AG04449 (cell line): ENCODE measurements at regions of chr11 and their contacts with region 1.

Region 1: DNA sequence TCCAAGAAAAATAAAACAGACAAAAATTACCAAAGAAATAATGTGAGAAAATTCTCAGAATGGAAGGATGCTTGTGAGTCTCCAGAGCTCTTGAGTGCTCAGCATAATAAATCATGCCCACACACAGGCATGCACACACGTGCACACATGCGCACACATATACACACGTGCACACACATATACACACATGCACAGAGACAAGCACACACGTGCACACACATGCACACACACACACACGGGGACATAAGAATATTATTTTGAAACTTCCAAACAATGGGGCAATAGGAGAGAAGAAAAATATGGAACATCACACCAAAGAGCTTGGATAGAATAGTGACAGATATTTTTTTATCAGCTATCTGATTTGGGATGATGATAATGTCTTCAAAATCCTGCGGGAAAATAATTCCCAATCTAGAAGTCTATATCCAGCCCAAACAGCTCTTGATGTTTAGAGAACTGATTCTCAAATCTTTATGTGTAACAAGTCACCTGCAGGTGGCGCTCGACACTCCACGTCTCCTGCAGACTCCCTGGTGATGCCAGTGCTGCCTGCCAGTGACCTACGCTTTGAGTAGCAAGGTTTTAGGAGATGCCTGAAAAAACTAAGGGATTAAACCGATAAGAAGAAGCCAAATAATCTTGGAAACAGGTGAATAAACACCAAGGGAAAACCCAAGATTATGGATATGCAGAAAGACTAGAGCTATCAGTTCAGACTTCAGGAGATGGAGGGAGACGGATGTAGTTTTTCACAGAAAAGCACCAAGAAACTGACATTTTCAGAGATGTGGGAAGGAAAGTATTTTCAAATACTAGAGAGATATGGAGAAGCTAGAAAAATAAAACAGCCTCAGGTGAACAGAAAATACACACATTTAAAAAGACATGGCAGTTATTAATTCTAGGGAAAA is 743.6 kb downstream of the ETS1 start:
- DNase-seq: peak; percentile 16
- H3K4me3 ChIP-seq: no peak overlapping the region
- CTCF ChIP-seq: peak; percentile 75

Region 2: DNA sequence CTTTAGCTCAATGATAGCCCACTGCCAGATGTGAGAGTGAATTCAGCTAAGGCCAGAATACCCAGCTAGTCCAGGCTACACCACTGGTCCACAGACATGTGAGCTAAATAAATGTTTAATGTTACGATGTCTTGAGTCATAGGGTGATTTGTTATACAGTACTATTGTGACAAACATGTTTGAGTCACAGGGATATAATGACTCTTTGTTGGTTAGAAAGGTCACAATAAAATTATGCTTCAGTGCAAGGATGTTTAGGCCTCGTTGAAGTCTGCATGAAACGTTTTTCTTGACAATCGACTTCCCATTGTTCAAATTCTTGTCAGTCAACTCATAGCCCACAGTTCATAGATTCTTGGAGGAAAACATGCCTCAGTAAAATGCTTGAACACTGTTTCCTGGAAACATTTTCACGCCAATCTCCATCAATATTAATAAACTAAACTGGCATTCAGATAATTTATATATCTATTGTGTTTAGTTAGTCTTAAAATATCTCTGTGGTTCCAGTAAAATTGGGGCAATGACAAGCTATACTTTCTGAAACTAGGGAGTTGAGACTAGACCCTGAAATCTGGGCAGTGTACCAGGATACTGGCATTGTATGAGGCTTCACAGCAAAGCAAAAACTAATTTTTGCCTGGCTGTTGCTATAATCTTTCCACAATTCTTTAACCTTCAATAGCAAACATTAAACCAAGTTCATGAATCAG is 192.4 kb before region 1 on chr11:
- CTCF ChIA-PET with region 1: no interaction called
- POLR2A ChIA-PET with region 1: no interaction called
- DNase-seq: peak; percentile 21
- H3K4me3 ChIP-seq: no peak overlapping the region
- CTCF ChIP-seq: no peak

Region 3: GRCh38 chr11:127800989-127801688 is 42.6 kb before region 1 on chr11:
- CTCF ChIA-PET with region 1: no interaction called
- POLR2A ChIA-PET with region 1: no interaction called
- DNase-seq: no peak
- H3K4me3 ChIP-seq: no peak overlapping the region
- CTCF ChIP-seq: no peak

Region 4: DNA sequence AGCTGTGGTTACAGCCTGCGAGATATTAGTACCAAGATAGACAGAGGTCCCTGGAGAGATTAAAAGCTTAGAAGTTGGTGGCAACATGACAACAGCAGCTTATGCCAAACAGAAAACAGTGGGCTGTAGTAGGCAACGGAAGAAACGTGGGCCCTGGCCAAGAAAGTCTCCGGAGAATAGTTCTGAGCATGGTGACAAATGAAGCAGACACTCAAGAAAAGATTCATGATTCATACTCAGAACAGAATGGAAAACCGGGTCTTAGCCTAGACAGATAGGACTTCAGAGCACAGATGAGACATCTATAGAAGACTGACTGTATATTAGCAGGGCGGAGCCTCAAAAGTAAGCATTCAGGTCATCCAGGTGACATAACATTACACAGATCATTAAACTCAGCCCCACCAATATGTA is 16.2 kb after region 1 on chr11:
- CTCF ChIA-PET with region 1: interaction called, 23 read pairs
- POLR2A ChIA-PET with region 1: no interaction called
- DNase-seq: no peak
- H3K4me3 ChIP-seq: no peak overlapping the region
- CTCF ChIP-seq: no peak

Region 5: DNA sequence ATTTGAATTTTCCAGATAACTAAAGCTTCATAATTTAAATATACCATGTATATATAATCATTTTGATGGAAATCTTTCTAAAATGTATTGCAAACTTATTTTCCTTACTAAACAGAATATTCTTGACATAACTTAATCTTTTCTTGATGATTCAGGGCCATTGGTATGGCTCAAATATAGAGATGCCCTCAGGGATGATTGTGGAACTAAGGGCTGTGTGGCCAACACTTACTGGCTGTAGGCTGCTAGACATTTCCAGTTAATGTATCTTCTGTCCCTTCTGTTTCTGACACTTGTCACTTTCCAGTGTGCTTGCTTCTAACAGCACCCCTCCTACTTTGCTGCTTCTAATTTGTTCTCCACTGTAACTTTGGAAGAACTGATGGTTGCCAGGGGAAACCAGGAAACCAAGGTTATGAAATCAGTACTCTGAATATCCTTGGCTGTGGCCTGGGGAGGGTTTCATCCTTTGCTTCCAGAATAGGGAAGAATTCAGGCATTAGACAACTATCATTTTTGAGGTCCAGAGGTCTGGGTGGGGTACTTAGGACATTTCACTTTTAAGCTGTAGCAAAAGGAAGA is 46.4 kb after region 1 on chr11:
- CTCF ChIA-PET with region 1: interaction called, 11 read pairs
- POLR2A ChIA-PET with region 1: no interaction called
- DNase-seq: no peak
- H3K4me3 ChIP-seq: no peak overlapping the region
- CTCF ChIP-seq: no peak

Region 6: GRCh38 chr11:128021349-128022006 is 177.7 kb after region 1 on chr11:
- CTCF ChIA-PET with region 1: interaction called, 143 read pairs
- POLR2A ChIA-PET with region 1: no interaction called
- DNase-seq: no peak
- H3K4me3 ChIP-seq: no peak overlapping the region
- CTCF ChIP-seq: peak; percentile 52

Region 7: GRCh38 chr11:128026596-128026995 is 182.9 kb after region 1 on chr11:
- CTCF ChIA-PET with region 1: interaction called, 143 read pairs
- POLR2A ChIA-PET with region 1: no interaction called
- DNase-seq: peak; percentile 89
- H3K4me3 ChIP-seq: no peak overlapping the region
- CTCF ChIP-seq: no peak